Stomach (tissue), 19 donors: ENCODE measurements at regions of chr6 and their contacts with region 1.

Region 1: GRCh38 chr6:75934643-75935472 is 137.6 kb downstream of the IMPG1 start:
- DNase-seq: peak in 1 of 2 donors; percentile 89
- H3K4me3 ChIP-seq: peak overlapping the region; percentile 29 to 44 (median 38)
- H3K27ac ChIP-seq: no peak overlapping the region
- H3K4me1 ChIP-seq: peaks cover 6 to 14% (median 12%) of the 10 kb centered on the region in 4 donors
- H3K27me3 ChIP-seq: peaks cover 0 to 9% (median 5%) of the 10 kb centered on the region in 3 donors
- CTCF ChIP-seq: peak in 5 of 7 experiments; percentile 35 to 64 (median 53)
- EP300 ChIP-seq: no peak
- POLR2A ChIP-seq: no peak

Region 2: DNA sequence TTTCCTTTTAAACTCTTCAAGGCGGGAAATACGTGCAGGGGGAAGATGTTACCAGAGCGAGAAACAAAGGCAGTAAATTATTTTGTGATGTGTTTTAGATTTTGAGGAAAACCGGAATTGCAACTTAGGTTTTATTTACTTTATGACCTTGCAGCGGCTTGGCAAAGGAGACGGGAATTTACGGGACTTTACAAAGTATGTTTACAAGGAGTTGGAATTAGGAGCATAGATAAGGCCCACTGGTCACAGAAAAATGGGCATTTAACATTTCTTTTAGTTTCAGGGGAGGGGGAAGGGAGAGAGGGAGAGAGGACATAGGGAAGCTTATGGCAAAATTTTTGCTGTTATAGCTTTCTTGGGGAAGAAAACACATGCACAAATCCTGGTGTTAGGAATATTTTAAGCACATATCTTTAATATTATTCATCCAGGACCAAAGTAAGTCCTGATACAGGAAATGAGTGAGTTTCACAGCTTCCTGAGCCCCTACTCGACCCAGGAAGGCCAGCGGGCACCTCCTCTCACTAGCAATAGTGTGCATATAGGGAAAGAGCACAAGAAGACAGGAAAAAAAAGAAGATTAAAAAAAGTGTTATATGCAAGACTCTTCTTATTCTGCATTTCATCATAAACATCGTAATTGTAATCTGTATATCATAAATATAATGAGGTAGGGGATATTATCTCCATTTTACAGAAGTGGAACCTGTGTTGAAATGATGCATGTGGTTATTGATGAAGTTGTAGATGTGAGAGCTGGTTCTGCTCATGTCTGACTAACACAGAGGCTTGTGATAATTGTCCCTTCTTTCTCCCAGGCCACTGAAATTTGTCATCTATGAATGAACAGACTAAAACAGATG is 84.9 kb before region 1 on chr6:
- intact Hi-C with region 1: no loop called
- DNase-seq: peak; percentile 46 to 57
- H3K4me3 ChIP-seq: no peak overlapping the region
- H3K27ac ChIP-seq: peak overlapping the region; percentile 22 to 78 (median 73)
- H3K4me1 ChIP-seq: peaks cover 6 to 30% (median 19%) of the 10 kb centered on the region in 4 donors
- H3K27me3 ChIP-seq: no peaks in the 10 kb centered on the region
- CTCF ChIP-seq: no peak
- EP300 ChIP-seq: no peak
- POLR2A ChIP-seq: no peak

Region 3: DNA sequence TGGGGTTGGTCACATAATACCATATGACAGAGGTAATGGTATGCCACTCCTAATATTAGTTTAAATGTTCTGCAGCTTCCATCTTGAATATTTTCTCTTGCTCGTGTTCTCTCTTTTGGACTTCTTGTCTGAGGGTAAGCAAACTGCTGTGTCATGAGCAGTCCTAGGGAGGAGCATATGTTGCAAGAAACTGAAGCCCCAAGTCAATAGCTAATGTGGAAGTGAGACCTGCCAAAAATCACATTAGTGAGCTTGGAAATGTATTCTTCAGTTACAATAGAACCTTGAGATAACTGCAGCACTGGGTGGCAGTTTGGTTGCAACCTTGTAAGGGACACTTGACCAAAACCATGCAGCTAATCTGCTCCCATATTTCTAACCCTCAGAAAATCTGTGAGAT is 315.8 kb after region 1 on chr6:
- intact Hi-C with region 1: no loop called
- DNase-seq: no peak
- H3K4me3 ChIP-seq: no peak overlapping the region
- H3K27ac ChIP-seq: no peak overlapping the region
- H3K4me1 ChIP-seq: no peaks in the 10 kb centered on the region
- H3K27me3 ChIP-seq: no peaks in the 10 kb centered on the region
- CTCF ChIP-seq: no peak
- EP300 ChIP-seq: no peak
- POLR2A ChIP-seq: no peak

Region 4: GRCh38 chr6:76351275-76351674 is 416.4 kb after region 1 on chr6:
- intact Hi-C with region 1: loop called (anchors 10 kb)
- DNase-seq: peak in 1 of 2 donors; percentile 47
- H3K4me3 ChIP-seq: no peak overlapping the region
- H3K27ac ChIP-seq: no peak overlapping the region
- H3K4me1 ChIP-seq: no peaks in the 10 kb centered on the region
- H3K27me3 ChIP-seq: no peaks in the 10 kb centered on the region
- CTCF ChIP-seq: peak in 3 of 7 experiments; percentile 11 to 38 (median 33)
- EP300 ChIP-seq: no peak
- POLR2A ChIP-seq: no peak

Region 5: DNA sequence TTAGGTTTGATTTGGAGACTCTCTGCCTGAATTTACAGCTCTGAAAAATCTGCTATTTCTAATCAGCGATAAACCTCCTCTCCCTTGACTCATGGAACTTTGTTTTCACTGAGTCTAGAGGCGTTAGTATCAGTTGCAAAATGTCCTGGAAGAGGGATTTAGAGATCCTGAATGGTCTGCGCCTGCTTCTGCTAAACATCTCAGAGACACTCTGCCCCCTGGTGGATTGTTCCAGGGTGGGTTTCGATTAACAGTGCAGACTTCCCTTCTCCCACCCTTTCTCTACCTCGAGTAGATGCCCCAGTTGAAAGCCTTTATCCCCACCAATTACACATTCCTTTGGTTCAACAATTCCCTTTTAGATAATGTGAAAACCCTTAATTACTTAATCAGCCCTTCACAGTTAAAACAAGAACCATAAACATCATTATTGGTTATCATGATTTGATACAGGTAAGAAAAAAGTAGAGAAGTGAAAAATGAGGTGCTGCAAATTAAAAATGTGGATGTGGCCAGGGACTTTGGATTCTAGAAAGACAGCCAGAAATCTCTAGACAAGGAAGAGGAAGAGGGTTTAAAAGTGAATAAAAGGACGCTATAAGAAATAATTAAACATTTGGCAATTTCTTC is 1523.0 kb after region 1 on chr6:
- intact Hi-C with region 1: loop called (anchors 5 kb)
- DNase-seq: peak; percentile 65 to 85
- H3K4me3 ChIP-seq: no peak overlapping the region
- H3K27ac ChIP-seq: no peak overlapping the region
- H3K4me1 ChIP-seq: peaks cover 0 to 7% (median 5%) of the 10 kb centered on the region in 4 donors
- H3K27me3 ChIP-seq: peaks cover 3 to 27% (median 11%) of the 10 kb centered on the region in 3 donors
- CTCF ChIP-seq: peak in 5 of 7 experiments; percentile 46 to 66 (median 59)
- EP300 ChIP-seq: no peak
- POLR2A ChIP-seq: no peak